ENCODE measurements at regions of chr17 and their contacts with region 1.

Region 1: DNA sequence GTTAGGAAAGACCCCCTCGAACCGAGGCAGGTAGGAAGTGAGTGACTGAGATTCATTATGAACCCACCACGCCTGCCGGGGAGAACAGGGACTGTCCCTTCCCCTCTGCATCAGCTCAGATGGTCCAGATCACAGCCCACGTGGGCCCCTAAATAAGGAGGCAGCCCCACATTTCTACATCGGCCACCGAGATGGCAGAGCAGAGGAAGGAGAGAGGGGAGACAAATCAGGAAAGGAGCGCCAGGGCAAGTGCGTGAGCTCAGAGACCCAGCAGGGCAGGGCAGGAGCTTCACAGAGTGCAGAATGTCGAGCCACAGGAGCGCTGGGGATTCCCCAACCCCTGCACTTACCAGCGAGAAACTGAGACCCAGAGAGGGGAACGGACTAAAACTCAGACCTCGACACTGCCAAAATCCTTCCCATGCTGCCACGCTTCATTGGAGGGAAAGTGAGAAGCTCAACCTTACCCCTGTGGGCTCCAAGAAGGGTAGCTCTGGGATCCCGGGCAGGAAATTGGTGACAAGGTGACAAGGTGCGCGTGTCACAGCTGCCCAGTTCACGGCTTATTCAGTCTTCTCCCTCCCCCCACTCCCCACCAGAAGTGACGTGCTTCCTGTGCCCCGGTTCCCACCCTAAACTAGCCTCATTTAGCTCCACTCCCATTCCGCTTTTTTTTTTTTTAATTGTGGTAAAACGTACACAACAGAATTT is at the start of gene ICAM2:
- DNase-seq: peak; percentile 82 to 99 (median 86)
- ATAC-seq: peak; percentile 69
- H3K4me3 ChIP-seq: peak within 1 kb of the TSS; percentile 97
- H3K4me3 Mint-ChIP-seq: peak within 1 kb of the TSS; percentile 99
- H3K27ac ChIP-seq: peak within 1 kb of the TSS; percentile 98 to 99
- H3K27ac Mint-ChIP-seq: peak within 1 kb of the TSS; percentile 100
- H3K4me1 ChIP-seq: peaks cover 70% of the 10 kb centered on the region
- H3K4me1 Mint-ChIP-seq: peaks cover 82% of the 10 kb centered on the region
- H3K27me3 ChIP-seq: no peaks in the 10 kb centered on the region
- H3K27me3 Mint-ChIP-seq: no peaks in the 10 kb centered on the region
- CTCF ChIP-seq: no peak
- total RNA-seq, gene ICAM2: 50.6 to 54.7 TPM

Region 2: GRCh38 chr17:63697341-63698286 is 322.6 kb before region 1 on chr17:
- CTCF ChIA-PET with region 1: no interaction called
- POLR2A ChIA-PET with region 1: interaction called, 14 read pairs
- intact Hi-C with region 1: no loop called
- DNase-seq: peak; percentile 77 to 92 (median 84)
- ATAC-seq: peak; percentile 33
- H3K4me3 ChIP-seq: peak overlapping the region; percentile 98
- H3K4me3 Mint-ChIP-seq: peak overlapping the region; percentile 100
- H3K27ac ChIP-seq: peak overlapping the region; percentile 73 to 91
- H3K27ac Mint-ChIP-seq: peak overlapping the region; percentile 100
- H3K4me1 ChIP-seq: peaks cover 78% of the 10 kb centered on the region
- H3K4me1 Mint-ChIP-seq: peaks cover 74% of the 10 kb centered on the region
- H3K27me3 ChIP-seq: no peaks in the 10 kb centered on the region
- H3K27me3 Mint-ChIP-seq: peaks cover 5% of the 10 kb centered on the region
- CTCF ChIP-seq: peak; percentile 82

Region 3: GRCh38 chr17:63946440-63947367 is 73.5 kb before region 1 on chr17:
- CTCF ChIA-PET with region 1: interaction called, 23 read pairs
- POLR2A ChIA-PET with region 1: interaction called, 18 read pairs
- intact Hi-C with region 1: loop called in 1 of 2 experiments (anchors 5 kb)
- DNase-seq: peak; percentile 29 to 81 (median 40)
- ATAC-seq: peak; percentile 80
- H3K4me3 ChIP-seq: peak overlapping the region; percentile 39
- H3K4me3 Mint-ChIP-seq: peak overlapping the region; percentile 58
- H3K27ac ChIP-seq: no peak overlapping the region
- H3K27ac Mint-ChIP-seq: no peak overlapping the region
- H3K4me1 ChIP-seq: peaks cover 25% of the 10 kb centered on the region
- H3K4me1 Mint-ChIP-seq: peaks cover 29% of the 10 kb centered on the region
- H3K27me3 ChIP-seq: no peaks in the 10 kb centered on the region
- H3K27me3 Mint-ChIP-seq: no peaks in the 10 kb centered on the region
- CTCF ChIP-seq: peak; percentile 87

Region 4: DNA sequence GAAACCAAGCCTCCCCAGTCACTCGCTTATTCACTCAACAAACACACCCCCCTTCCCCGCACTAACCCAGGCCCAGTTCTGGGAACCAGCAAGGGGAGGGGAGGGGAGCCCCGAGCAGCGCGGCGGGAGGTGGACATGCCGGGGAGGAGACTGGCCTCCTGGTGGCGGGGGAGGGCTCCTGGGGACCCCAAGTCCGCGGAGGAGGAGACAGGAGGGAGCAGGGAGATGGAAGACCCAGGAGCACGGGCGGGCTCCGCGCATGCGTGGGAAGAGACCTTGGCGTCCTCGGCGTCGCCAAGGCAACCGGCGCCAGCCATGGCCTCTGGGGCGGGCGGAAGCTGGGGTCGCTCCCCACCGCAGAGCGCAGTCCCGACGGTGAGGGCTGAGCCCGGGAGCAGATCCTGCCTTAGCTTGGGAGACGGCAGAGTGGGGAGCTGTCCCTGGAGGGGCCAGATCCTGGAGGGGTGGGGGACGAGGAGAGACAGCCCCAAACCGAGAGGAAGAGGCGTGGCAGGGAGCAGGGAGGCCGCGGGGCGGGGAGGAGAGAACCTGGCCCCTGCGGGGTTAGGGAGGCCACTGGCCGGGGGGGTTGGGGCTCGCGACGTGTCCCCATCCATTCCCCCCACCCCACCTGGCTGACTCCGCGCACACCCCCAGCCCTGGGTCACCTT is 22.0 kb before region 1 on chr17 and contains the start of gene PRR29:
- CTCF ChIA-PET with region 1: interaction called, 111 read pairs
- POLR2A ChIA-PET with region 1: interaction called, 156 read pairs
- intact Hi-C with region 1: loop called (anchors 1 to 2 kb)
- DNase-seq: peak; percentile 56 to 90 (median 70)
- ATAC-seq: peak; percentile 70
- H3K4me3 ChIP-seq: peak within 1 kb of the TSS; percentile 80
- H3K4me3 Mint-ChIP-seq: peak within 1 kb of the TSS; percentile 91
- H3K27ac ChIP-seq: no peak within 1 kb of the TSS
- H3K27ac Mint-ChIP-seq: peak within 1 kb of the TSS; percentile 73
- H3K4me1 ChIP-seq: peaks cover 45% of the 10 kb centered on the region
- H3K4me1 Mint-ChIP-seq: peaks cover 58% of the 10 kb centered on the region
- H3K27me3 ChIP-seq: no peaks in the 10 kb centered on the region
- H3K27me3 Mint-ChIP-seq: no peaks in the 10 kb centered on the region
- CTCF ChIP-seq: no peak
- total RNA-seq, gene PRR29: 0.56 to 0.71 TPM

Region 5: GRCh38 chr17:64041912-64042311 is 21.7 kb after region 1 on chr17:
- CTCF ChIA-PET with region 1: interaction called, 8 read pairs
- POLR2A ChIA-PET with region 1: interaction called, 12 read pairs
- intact Hi-C with region 1: no loop called
- DNase-seq: peak in 1 of 14 experiments; percentile 53
- ATAC-seq: peak; percentile 48
- H3K4me3 ChIP-seq: no peak overlapping the region
- H3K4me3 Mint-ChIP-seq: no peak overlapping the region
- H3K27ac ChIP-seq: no peak overlapping the region
- H3K27ac Mint-ChIP-seq: peak overlapping the region; percentile 72
- H3K4me1 ChIP-seq: peaks cover 25% of the 10 kb centered on the region
- H3K4me1 Mint-ChIP-seq: peaks cover 11% of the 10 kb centered on the region
- H3K27me3 ChIP-seq: no peaks in the 10 kb centered on the region
- H3K27me3 Mint-ChIP-seq: no peaks in the 10 kb centered on the region
- CTCF ChIP-seq: no peak

Region 6: DNA sequence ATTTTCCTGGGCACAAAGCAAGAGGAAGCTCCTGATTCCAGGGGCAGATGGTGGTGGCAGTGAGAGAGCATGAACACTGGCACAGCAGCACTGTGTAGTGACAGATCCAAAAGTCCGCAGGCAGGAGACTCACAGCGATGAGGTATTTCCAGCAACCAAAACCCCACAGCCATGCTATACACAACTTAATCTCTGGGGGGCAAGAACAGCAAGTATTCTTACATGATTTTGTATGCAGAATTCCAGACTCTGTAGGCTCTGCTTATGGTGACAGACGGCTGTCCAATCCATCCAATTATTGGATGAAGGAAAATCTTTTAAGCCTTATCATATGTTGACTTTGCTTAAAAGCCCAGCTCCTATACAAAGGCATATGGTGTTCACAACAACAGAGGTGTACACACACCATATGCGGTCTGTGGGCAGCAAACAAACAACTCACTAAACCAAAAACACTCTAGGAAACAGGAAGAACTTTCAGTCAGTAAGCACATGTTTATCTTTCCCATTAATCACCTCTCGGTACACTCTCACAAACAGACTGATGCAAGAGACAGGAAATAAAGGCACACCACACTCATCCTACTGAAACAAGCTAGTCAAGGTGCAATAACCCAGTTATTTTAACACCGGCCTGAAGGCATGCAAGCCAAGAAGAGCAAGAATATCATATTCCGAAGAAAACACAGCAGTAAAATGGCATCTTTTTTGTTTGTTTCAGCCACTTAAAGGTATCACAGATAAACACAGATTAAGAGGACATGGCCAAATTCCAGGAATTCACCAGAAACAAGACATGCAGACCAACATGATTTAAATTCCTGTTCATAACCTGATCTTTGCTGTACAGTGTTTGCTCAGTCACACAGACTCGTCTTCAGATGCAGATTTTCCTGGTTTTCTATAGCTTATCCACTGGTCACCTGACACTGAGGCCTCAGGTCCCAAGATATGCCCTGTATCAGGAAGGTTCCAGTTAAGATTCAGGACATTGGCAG is 61.9 kb after region 1 on chr17:
- CTCF ChIA-PET with region 1: interaction called, 5 read pairs
- POLR2A ChIA-PET with region 1: interaction called, 17 read pairs
- intact Hi-C with region 1: no loop called
- DNase-seq: peak in 8 of 14 experiments; percentile 12 to 84 (median 30)
- ATAC-seq: peak; percentile 83
- H3K4me3 ChIP-seq: peak overlapping the region; percentile 11
- H3K4me3 Mint-ChIP-seq: peak overlapping the region; percentile 50
- H3K27ac ChIP-seq: peak overlapping the region in 1 of 2 donors; percentile 67
- H3K27ac Mint-ChIP-seq: no peak overlapping the region
- H3K4me1 ChIP-seq: peaks cover 64% of the 10 kb centered on the region
- H3K4me1 Mint-ChIP-seq: peaks cover 27% of the 10 kb centered on the region
- H3K27me3 ChIP-seq: no peaks in the 10 kb centered on the region
- H3K27me3 Mint-ChIP-seq: no peaks in the 10 kb centered on the region
- CTCF ChIP-seq: peak; percentile 28

Region 7: DNA sequence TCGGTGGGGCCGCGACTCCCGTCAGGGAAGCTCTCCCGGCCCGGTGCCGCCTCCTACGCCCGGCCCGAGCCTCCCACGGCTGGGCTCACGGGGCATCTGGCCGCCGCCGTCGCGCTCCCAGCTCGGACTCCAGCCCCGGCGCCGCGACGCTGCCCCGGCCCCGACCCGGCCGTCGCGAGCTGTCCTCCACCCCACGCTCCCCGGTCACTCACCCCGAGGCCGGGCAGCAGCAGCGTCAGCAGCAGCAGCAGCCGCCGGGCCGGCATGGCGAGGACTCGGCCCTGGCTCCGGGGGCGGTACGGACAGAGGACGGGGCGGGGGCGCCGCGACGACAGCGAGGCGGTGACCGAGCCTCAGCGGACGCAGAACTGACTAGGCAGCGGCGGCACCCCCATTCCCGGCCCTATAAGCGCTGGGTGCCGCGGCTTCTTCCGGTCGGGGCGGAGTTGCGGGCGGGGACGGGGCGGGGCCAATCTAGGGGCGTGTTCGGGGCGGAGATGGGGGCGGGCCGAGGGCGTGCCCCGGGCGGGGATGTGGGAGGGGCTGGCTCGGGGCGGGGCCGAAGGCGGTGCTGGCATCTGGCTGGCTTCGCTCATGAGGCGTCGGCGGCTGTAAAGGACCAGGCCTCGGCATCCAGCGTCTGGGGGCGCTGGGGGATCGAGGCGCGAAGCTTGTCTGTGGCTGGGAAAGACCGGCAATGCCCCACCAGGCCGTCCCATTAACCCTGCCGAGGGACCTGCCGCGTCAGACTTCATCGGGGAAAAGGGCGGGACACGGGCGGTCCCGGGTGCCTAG is 109.8 kb after region 1 on chr17 and contains the start of gene ERN1:
- CTCF ChIA-PET with region 1: interaction called, 170 read pairs
- POLR2A ChIA-PET with region 1: interaction called, 84 read pairs
- intact Hi-C with region 1: no loop called
- DNase-seq: peak; percentile 85 to 95 (median 91)
- ATAC-seq: peak; percentile 86
- H3K4me3 ChIP-seq: peak within 1 kb of the TSS; percentile 89
- H3K4me3 Mint-ChIP-seq: peak within 1 kb of the TSS; percentile 99
- H3K27ac ChIP-seq: peak within 1 kb of the TSS; percentile 88 to 96
- H3K27ac Mint-ChIP-seq: peak within 1 kb of the TSS; percentile 92
- H3K4me1 ChIP-seq: peaks cover 36% of the 10 kb centered on the region
- H3K4me1 Mint-ChIP-seq: peaks cover 57% of the 10 kb centered on the region
- H3K27me3 ChIP-seq: no peaks in the 10 kb centered on the region
- H3K27me3 Mint-ChIP-seq: no peaks in the 10 kb centered on the region
- CTCF ChIP-seq: no peak
- total RNA-seq, gene ERN1: 62.7 to 67.8 TPM